GM12878 (cell line): ENCODE measurements at regions of chr2 and their contacts with region 1.

Region 1: DNA sequence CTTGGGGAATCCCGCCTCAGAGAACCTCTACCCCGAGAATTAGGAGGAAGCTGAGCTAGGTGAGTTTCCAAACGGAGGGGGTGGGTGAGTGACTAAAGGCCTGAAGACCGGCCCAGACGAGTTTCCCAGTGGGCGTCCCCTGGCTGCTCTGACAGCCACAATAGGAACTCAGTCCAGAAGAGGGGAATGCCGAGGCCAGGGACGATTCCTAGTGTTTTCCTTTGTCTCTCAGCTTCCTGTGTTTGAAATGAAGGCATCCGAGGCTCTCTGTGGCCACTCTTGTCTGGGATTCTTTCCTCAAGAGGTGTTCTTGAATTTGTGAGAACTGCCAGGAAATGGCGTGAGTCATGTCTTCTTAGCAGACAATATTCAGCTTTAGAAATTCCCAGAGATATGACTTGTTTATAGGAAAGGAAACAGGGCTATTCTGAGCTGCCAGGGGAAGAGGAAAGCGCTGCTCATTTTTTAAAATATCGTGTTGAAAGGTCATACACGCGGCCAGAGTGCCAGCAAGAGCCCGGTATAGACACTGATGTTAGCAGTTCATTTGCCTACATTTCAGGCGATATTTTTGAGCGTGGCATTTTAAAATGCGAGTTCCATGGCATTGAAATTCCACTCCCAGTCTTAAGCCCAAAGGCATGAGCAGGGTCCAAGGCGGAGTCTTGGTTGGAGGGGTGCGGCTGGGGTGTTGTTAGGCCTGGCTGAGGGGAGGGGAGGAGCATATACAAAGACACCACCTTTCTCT is 169.1 kb upstream of the KLF7 start:
- DNase-seq: no peak
- ATAC-seq: peak; percentile 43
- H3K4me3 ChIP-seq: peak overlapping the region; percentile 46
- H3K27ac ChIP-seq: peak overlapping the region; percentile 98
- H3K4me1 ChIP-seq: peaks cover 59% of the 10 kb centered on the region
- H3K27me3 ChIP-seq: no peaks in the 10 kb centered on the region
- CTCF ChIP-seq: no peak
- EP300 ChIP-seq: no peak
- POLR2A ChIP-seq: no peak
- RAD21 ChIP-seq: no peak

Region 2: GRCh38 chr2:205706769-205707381 is 1627.9 kb before region 1 on chr2:
- CTCF ChIA-PET with region 1: no interaction called
- POLR2A ChIA-PET with region 1: no interaction called
- RAD21 ChIA-PET with region 1: no interaction called
- SMC1A ChIA-PET with region 1: no interaction called
- in situ Hi-C with region 1: loop called (anchors 25 kb)
- intact Hi-C with region 1: no loop called
- DNase-seq: peak; percentile 84
- ATAC-seq: peak; percentile 97
- H3K4me3 ChIP-seq: no peak overlapping the region
- H3K27ac ChIP-seq: peak overlapping the region; percentile 96
- H3K4me1 ChIP-seq: peaks cover 37% of the 10 kb centered on the region
- H3K27me3 ChIP-seq: no peaks in the 10 kb centered on the region
- CTCF ChIP-seq: no peak
- EP300 ChIP-seq: peak; percentile 21 to 64; a peak in 1 of 4 replicates
- POLR2A ChIP-seq: peak; percentile 88
- RAD21 ChIP-seq: no peak

Region 3: DNA sequence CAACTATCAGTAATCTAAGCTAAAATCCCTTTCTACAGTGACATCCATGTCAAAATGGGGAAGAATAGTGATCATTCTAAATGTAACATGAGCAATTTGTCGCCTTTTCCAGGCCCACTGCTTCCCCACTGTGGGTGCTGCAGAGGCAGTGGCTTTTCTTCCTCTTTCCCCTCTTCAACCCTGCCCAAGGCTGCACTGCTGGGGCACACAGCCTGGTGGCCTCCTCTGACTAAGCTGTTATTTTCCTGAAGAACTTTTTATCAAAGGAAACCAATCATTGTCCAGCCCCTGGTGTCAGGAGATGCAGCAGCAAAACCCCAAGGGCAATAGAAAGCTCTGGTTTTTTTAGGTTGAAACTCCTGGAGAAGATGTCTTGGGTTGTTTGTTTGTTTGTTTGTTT is 51.4 kb before region 1 on chr2:
- CTCF ChIA-PET with region 1: interaction called, 6 read pairs
- POLR2A ChIA-PET with region 1: interaction called, 11 read pairs
- RAD21 ChIA-PET with region 1: interaction called, 56 read pairs
- SMC1A ChIA-PET with region 1: interaction called, 93 read pairs
- in situ Hi-C with region 1: no loop called
- intact Hi-C with region 1: loop called (anchors 2 kb)
- DNase-seq: no peak
- ATAC-seq: peak; percentile 57
- H3K4me3 ChIP-seq: no peak overlapping the region
- H3K27ac ChIP-seq: peak overlapping the region; percentile 36; the same call in 1 of the 2 replicates
- H3K4me1 ChIP-seq: peaks cover 27% of the 10 kb centered on the region
- H3K27me3 ChIP-seq: no peaks in the 10 kb centered on the region
- CTCF ChIP-seq: peak in 1 of 3 experiments; percentile 2; a peak in 1 of 6 replicates
- EP300 ChIP-seq: no peak
- POLR2A ChIP-seq: no peak
- RAD21 ChIP-seq: 0 out of 2 replicates have a peak, but pooled peaks have one; percentile 25

Region 4: DNA sequence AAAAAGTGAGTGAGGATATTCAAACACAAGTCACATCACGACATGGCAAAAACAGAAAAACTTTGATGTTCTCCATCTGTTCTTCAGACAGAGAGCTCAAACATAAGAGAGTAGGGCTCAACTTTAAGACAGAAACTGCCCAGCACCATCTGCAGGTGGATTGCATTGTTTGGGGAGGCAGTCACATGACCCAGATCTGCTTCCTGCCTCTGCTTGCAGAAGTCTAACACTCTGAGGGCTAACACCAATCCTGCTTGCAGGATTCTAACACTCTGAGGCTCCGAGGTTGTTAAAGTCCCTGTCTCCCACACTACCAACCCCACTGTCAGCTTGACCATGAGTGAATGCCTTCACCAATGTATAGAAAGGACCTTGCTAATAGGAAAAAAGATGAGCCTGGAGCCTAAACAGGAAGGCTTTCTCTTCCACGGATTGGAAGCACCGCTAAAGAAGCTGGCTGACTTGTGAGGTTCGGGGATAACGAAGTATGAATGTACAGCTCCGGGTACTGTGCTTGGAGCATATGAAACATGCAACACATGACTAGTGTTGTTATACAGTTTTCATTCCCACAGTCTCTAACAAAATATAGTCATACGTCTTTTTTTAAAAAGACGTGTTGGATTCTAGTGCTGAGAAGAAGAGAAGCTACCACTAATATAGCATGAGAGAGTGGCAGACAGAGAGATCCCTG is 18.3 kb after region 1 on chr2:
- CTCF ChIA-PET with region 1: interaction called, 6 read pairs
- POLR2A ChIA-PET with region 1: interaction called, 3 read pairs
- RAD21 ChIA-PET with region 1: interaction called, 7 read pairs
- SMC1A ChIA-PET with region 1: interaction called, 22 read pairs
- in situ Hi-C with region 1: no loop called
- intact Hi-C with region 1: no loop called
- DNase-seq: no peak
- ATAC-seq: peak; percentile 90
- H3K4me3 ChIP-seq: no peak overlapping the region
- H3K27ac ChIP-seq: no peak overlapping the region
- H3K4me1 ChIP-seq: peaks cover 7% of the 10 kb centered on the region; the same call in 1 of the 2 replicates
- H3K27me3 ChIP-seq: no peaks in the 10 kb centered on the region
- CTCF ChIP-seq: peak in 1 of 3 experiments; percentile 45; a peak in 1 of 6 replicates
- EP300 ChIP-seq: no peak
- POLR2A ChIP-seq: no peak
- RAD21 ChIP-seq: peak; percentile 55

Region 5: DNA sequence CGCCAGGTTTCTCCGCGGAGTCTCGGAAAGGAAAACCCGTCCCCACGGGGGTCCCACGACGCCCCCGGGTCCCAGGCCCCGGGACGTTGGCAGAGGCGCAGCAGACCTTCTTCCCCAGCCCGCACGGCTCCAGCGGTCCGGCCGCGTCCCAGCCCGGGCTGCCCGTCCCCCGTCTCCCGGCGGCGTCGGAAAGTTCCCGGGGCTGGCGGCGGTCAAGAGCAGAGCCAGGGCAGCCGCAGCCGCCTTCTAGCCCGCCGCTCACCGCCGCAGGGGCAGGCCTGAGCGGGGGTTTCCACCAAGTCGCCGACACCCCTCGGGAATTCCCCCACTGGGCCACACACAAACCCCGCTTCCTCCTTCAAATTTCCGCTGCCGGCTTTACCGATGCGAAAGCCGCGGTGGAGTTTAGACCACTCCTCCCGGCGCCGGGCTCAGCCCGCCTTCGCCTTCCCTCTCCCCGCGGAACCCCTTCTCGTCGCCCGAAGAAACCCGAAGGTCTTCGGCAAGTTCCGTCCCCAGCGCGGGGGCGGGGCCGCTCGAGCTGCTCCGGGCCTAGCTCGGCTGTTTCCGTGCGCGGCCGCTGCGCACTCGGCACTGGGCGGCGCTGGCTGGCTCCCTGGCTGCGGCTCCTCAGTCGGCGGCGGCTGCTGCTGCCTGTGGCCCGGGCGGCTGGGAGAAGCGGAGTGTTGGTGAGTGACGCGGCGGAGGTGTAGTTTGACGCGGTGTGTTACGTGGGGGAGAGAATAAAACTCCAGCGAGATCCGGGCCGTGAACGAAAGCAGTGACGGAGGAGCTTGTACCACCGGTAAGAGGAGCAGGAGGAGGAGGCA is 194.7 kb after region 1 on chr2 and contains the start of gene CREB1:
- CTCF ChIA-PET with region 1: no interaction called
- POLR2A ChIA-PET with region 1: interaction called, 3 read pairs
- RAD21 ChIA-PET with region 1: interaction called, 4 read pairs
- SMC1A ChIA-PET with region 1: interaction called, 3 read pairs
- in situ Hi-C with region 1: no loop called
- intact Hi-C with region 1: loop called (anchors 5 kb)
- DNase-seq: peak; percentile 93
- ATAC-seq: peak; percentile 87
- H3K4me3 ChIP-seq: peak within 1 kb of the TSS; percentile 97
- H3K27ac ChIP-seq: peak within 1 kb of the TSS; percentile 99
- H3K4me1 ChIP-seq: peaks cover 26% of the 10 kb centered on the region
- H3K27me3 ChIP-seq: no peaks in the 10 kb centered on the region
- CTCF ChIP-seq: no peak; a peak in 1 of 6 replicates
- EP300 ChIP-seq: peak; percentile 77 to 79; a peak in 2 of 4 replicates
- POLR2A ChIP-seq: peak; percentile 94
- RAD21 ChIP-seq: no peak
- polyA plus RNA-seq, gene CREB1: 13.4 to 22.2 TPM